Panc1 (cell line): ENCODE measurements at regions of chr15 and their contacts with region 1.

Region 1: GRCh38 chr15:50883903-50884302 is 24.6 kb upstream of the AP4E1 start:
- DNase-seq: no peak
- ATAC-seq: no peak
- H3K4me3 ChIP-seq: no peak overlapping the region
- H3K27ac ChIP-seq: no peak overlapping the region
- H3K4me1 ChIP-seq: peaks cover 7% of the 10 kb centered on the region; the same call in 1 of the 2 replicates
- H3K27me3 ChIP-seq: no peaks in the 10 kb centered on the region
- CTCF ChIP-seq: no peak

Region 2: DNA sequence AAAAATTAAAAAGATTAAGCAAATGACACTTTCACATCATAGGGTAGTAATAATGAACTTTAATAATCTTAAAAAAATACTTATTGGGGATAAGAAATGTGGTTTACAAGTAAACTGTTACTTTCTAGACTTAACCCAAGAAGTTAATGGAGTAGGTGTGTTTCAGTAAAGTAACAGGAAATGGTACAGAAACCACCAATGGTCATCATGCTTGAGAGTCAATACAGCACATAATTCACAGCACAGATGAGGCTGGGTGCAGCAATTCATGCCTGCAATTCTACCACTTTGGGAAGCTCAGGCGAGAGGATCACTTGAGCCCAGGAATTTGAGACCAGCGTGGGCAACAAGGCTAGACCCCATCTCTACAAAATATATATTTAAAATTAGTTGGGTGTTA is 325.9 kb before region 1 on chr15:
- CTCF ChIA-PET with region 1: no interaction called
- POLR2A ChIA-PET with region 1: no interaction called
- in situ Hi-C with region 1: no loop called
- intact Hi-C with region 1: no loop called
- DNase-seq: no peak
- ATAC-seq: no peak
- H3K4me3 ChIP-seq: no peak overlapping the region
- H3K27ac ChIP-seq: no peak overlapping the region
- H3K4me1 ChIP-seq: no peaks in the 10 kb centered on the region
- H3K27me3 ChIP-seq: no peaks in the 10 kb centered on the region
- CTCF ChIP-seq: no peak

Region 3: DNA sequence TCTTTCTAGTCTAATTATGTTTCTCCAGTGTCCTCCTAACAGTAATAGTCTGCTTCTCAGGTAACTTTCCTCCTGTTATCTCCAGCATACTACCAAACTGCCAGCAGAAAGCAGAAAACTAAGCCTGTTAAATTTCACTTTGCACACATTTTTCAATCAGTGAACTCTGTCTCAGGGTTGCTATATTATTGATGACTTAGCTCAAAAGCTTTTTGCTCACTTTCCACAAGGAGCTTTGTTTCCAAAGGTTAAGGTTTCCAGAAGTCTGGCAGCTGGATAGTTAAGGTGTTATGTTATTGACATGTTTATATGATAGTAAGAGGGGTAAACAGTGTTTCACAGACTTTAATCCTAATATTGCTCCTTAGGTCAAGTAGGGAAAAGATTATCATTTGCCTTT is 202.4 kb before region 1 on chr15:
- CTCF ChIA-PET with region 1: interaction called, 11 read pairs
- POLR2A ChIA-PET with region 1: no interaction called
- in situ Hi-C with region 1: no loop called
- intact Hi-C with region 1: loop called (anchors 5 kb)
- DNase-seq: no peak
- ATAC-seq: no peak
- H3K4me3 ChIP-seq: no peak overlapping the region
- H3K27ac ChIP-seq: no peak overlapping the region
- H3K4me1 ChIP-seq: peaks cover 5% of the 10 kb centered on the region; the same call in 1 of the 2 replicates
- H3K27me3 ChIP-seq: no peaks in the 10 kb centered on the region
- CTCF ChIP-seq: no peak

Region 4: DNA sequence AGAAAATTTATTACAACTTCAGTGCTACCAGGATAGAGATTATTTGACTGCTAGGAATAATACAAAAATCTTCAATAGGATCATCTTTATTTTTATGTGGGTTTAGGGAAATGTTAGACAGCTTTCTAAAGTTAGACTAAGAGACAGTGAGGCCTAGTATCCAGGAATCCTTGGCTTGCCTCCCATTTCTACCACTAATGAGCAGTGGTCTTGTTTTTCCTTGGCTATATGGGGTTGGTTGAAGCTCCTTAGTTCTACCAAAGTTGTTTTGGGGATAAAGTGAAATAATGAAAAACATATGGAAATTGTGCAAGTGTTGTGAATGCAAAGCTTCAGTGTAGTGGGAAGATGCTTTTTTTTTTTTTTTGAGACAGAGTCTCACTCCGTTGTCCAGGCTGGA is 41.4 kb after region 1 on chr15:
- CTCF ChIA-PET with region 1: no interaction called
- POLR2A ChIA-PET with region 1: no interaction called
- in situ Hi-C with region 1: no loop called
- intact Hi-C with region 1: no loop called
- DNase-seq: no peak
- ATAC-seq: no peak
- H3K4me3 ChIP-seq: no peak overlapping the region
- H3K27ac ChIP-seq: no peak overlapping the region
- H3K4me1 ChIP-seq: no peaks in the 10 kb centered on the region
- H3K27me3 ChIP-seq: no peaks in the 10 kb centered on the region
- CTCF ChIP-seq: no peak

Region 5: GRCh38 chr15:51067510-51067909 is 183.6 kb after region 1 on chr15:
- CTCF ChIA-PET with region 1: interaction called, 11 read pairs
- POLR2A ChIA-PET with region 1: no interaction called
- in situ Hi-C with region 1: no loop called
- intact Hi-C with region 1: no loop called
- DNase-seq: no peak
- ATAC-seq: no peak
- H3K4me3 ChIP-seq: no peak overlapping the region
- H3K27ac ChIP-seq: no peak overlapping the region
- H3K4me1 ChIP-seq: no peaks in the 10 kb centered on the region
- H3K27me3 ChIP-seq: no peaks in the 10 kb centered on the region
- CTCF ChIP-seq: no peak